GM10248 (cell line): ENCODE measurements at regions of chr13 and their contacts with region 1.

Region 1: GRCh38 chr13:40083841-40084240 is 428.4 kb downstream of the COG6 start:
- DNase-seq: no peak
- CTCF ChIP-seq: no peak

Region 2: DNA sequence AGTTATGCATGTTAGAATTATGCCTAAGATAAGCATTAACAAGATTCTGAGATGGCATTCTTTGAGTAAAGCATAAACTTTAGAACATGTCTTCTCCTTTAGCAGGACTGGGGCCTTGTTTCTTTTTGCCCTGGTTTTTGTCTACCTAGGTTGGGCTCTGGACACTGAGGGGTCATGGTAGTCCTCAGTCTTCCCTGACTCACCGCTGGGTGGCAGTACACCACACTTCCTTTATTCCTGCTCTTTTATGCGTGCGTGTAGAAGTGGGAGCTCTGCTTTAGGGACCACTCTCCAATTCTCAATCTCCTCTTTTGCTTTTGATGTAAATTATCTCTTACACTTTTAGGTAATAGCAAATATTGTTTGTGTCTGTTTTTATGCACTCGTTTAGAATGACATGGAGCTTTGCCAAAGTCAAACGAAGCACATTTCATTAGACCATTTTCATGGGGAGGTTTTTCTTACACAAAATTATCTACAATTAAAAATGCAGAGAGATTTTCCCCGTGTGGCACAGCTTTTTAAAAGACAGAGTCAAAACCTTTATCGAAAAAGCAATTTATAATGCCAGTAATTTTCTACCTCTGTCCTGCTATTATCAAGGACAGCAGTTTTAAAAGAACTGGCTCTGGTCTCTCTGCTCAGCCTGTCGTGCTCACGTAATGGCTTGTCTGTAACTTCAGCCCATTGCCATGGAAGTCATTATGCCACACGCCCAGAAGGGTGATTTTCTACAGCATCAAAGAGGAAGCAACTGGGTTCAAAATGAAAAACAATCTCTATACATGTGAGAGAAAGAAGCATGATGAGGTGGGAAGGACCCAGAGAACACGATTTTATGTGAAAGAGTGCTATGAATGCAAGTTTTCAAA is 14.4 kb before region 1 on chr13:
- CTCF ChIA-PET with region 1: interaction called, 20 read pairs
- POLR2A ChIA-PET with region 1: no interaction called
- DNase-seq: peak; percentile 59
- CTCF ChIP-seq: peak; percentile 77

Region 3: GRCh38 chr13:41365631-41366030 is 1281.8 kb after region 1 on chr13:
- CTCF ChIA-PET with region 1: no interaction called
- POLR2A ChIA-PET with region 1: no interaction called
- DNase-seq: no peak
- CTCF ChIP-seq: no peak